ENCODE measurements at regions of chr17 and their contacts with region 1.

Region 1: GRCh38 chr17:39094607-39095308 is 56.7 kb downstream of the PLXDC1 start:
- DNase-seq: no peak
- H3K4me3 ChIP-seq: no peak overlapping the region
- H3K27ac ChIP-seq: no peak overlapping the region
- H3K4me1 ChIP-seq: peaks cover 0 to 3% (median 2%) of the 10 kb centered on the region in 4 experiments; a peak in 2 of 7 replicates
- H3K27me3 ChIP-seq: no peaks in the 10 kb centered on the region
- CTCF ChIP-seq: no peak
- EP300 ChIP-seq: no peak
- POLR2A ChIP-seq: no peak
- RAD21 ChIP-seq: no peak

Region 2: DNA sequence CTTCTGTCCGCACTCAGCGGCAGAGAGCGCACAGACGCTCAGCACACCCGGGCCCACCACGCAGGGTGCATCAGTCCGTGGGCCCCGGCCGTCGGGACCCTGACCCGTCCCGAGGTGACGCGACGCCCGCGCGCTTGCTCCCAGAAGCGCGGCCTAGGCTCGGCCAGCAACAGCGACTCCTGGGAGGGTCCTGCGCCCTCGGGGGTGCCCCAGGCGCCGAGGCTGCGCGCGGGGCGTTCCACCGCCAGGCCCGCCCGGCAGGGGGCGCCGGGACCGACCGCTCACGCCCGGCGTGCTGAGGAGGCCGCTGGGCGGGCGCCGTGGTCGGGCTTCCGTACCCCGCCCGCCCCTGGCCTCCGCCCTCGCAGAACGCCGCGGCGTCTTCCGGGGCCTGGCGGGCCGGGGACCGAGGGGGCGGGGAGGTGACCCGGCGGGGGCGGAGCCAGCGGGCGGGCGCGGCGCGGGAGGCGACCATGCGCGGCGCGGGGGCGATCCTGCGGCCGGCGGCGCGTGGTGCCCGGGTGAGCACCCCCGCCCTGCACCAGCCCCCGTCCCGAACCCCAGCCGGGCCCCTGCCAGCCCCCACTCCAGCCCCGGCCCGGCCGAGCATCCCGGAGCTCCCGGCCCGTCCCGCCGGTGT is 364.8 kb before region 1 on chr17 and contains the start of gene CISD3:
- CTCF ChIA-PET with region 1: no interaction called
- POLR2A ChIA-PET with region 1: no interaction called
- DNase-seq: peak in 1 of 2 experiments; percentile 84
- H3K4me3 ChIP-seq: peak within 1 kb of the TSS; percentile 48 to 72 (median 63)
- H3K27ac ChIP-seq: no peak within 1 kb of the TSS
- H3K4me1 ChIP-seq: peaks cover 0 to 10% (median 5%) of the 10 kb centered on the region in 4 experiments; a peak in 5 of 7 replicates
- H3K27me3 ChIP-seq: peaks cover 0 to 17% (median 7%) of the 10 kb centered on the region in 4 experiments; a peak in 3 of 7 replicates
- CTCF ChIP-seq: peak; percentile 59 to 73 (median 62)
- EP300 ChIP-seq: no peak
- POLR2A ChIP-seq: 0 out of 3 replicates have a peak, but pooled peaks of 1 of the 2 experiments have one; percentile 17
- RAD21 ChIP-seq: peak in 1 of 2 experiments; percentile 47; a peak in 2 of 4 replicates
- total RNA-seq, gene CISD3: 11.1 and 11.6 TPM in 2 replicates

Region 3: DNA sequence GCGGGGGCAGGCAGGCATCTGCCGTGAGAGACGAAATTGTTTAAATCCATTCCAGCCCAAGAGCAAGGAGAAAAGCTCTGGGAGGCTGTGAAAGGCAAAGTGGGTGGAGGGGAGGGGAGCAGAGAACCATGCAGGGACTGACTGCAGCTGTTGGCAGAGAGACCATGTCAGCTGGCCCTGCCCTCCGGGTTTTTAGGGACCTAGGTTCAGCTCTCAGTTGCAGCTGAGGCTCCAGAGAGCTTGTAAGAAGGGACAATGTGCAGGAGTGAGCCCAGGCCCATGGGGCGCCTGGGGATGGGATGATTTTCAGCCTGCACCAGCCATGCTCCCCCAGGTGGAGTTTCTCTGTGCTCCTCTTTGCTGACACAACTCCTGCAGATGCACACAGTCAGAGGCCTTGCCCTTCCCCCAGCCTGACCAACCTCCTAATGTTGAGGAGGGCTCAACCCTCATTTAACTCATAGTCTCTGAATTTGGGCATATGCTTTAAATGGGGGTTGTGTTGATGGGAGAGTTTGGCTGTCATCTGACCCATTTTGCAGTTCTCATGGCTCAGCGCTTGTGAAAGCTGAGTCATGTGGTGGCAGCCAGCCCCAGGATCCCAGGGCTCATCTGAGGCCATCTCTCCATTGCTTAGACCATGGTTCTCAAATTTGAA is 14.2 kb before region 1 on chr17:
- CTCF ChIA-PET with region 1: interaction called, 15 read pairs
- POLR2A ChIA-PET with region 1: interaction called, 4 read pairs
- DNase-seq: no peak
- H3K4me3 ChIP-seq: peak overlapping the region in 2 of 4 experiments; percentile 7 to 9; a peak in 3 of 8 replicates
- H3K27ac ChIP-seq: no peak overlapping the region
- H3K4me1 ChIP-seq: peaks cover 4 to 16% (median 7%) of the 10 kb centered on the region in 4 experiments
- H3K27me3 ChIP-seq: no peaks in the 10 kb centered on the region
- CTCF ChIP-seq: no peak
- EP300 ChIP-seq: no peak
- POLR2A ChIP-seq: no peak
- RAD21 ChIP-seq: no peak

Region 4: DNA sequence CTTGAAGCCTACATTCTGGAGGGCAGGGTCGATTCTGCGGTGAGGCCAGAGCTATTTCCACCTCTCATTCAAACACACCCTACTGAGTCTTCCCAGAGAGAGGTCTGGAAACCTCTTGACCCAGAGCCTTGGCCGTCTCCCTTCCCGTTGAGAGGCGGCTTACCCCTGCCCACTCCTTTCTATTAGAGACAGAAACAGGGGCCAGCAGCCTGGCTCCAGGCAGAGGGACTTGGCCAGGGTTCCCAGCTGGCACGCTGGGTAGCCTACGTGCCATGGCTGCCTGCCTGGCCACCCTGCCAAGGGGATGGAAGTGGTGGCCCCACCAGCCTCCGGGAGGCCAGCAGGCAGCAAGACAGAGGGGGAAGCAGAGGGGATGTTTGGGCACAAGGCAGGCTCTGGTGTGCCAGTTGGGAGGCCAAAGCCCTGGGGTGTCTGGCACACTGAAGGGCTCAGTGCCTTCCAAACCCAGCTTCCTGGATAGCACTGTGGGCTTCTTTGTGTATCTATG is 124.9 kb after region 1 on chr17:
- CTCF ChIA-PET with region 1: no interaction called
- POLR2A ChIA-PET with region 1: no interaction called
- DNase-seq: no peak
- H3K4me3 ChIP-seq: no peak overlapping the region
- H3K27ac ChIP-seq: no peak overlapping the region
- H3K4me1 ChIP-seq: peaks cover 0 to 15% (median 9%) of the 10 kb centered on the region in 4 experiments; a peak in 5 of 7 replicates
- H3K27me3 ChIP-seq: peaks cover 6 to 35% (median 27%) of the 10 kb centered on the region in 4 experiments
- CTCF ChIP-seq: no peak
- EP300 ChIP-seq: no peak
- POLR2A ChIP-seq: no peak
- RAD21 ChIP-seq: no peak